Activated CD4-positive, alpha-beta T cell treated with anti-CD3 and anti-CD28 coated beads for 36 hours (primary cell): ENCODE measurements at regions of chr17 and their contacts with region 1.

Region 1: DNA sequence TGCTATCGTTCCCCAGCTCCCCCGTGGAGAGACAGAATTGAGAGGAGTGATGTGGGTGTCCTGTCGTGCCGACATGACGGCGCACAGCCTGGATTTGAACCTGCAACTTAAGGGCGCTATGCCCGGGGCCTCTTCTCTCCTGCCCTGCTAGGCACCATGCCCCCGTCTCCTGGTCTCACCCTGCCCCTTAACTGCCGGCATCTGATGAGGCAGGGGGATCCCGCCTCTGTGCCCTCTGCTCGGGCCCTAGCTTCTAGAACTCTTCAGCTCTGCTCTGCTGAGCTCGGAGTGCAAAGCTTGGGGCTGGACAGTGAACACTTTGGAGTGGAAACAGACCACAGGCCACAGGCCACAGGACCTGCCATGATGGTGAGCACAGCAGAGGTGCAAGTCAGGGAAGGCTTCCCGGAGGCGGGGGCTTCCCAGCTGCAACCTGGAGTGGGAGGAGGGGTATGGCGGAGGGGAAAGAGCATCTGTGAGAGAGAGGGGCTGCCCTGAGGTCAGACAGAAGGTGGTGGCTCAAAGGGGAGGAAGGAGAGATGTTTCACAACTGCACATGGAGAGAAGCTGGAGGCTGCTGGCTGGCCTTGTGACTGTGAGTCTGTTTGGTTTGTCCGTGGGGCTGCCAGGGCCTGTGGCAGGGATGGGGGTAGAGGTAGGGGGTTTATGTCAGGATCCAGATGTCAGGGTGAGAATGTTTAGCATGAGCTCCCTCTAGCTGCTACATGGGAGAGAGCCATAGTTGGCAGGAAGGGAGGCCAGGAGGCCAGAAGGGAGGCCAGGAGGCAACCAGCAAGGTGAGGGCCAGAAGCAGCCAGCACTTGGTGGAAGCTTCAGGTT is 107.8 kb downstream of the CRLF3 start:
- DNase-seq: no peak
- ATAC-seq: no peak
- H3K4me3 Mint-ChIP-seq: no peak overlapping the region
- H3K27ac Mint-ChIP-seq: no peak overlapping the region
- H3K4me1 Mint-ChIP-seq: peaks cover 8% of the 10 kb centered on the region
- H3K27me3 Mint-ChIP-seq: no peaks in the 10 kb centered on the region

Region 2: DNA sequence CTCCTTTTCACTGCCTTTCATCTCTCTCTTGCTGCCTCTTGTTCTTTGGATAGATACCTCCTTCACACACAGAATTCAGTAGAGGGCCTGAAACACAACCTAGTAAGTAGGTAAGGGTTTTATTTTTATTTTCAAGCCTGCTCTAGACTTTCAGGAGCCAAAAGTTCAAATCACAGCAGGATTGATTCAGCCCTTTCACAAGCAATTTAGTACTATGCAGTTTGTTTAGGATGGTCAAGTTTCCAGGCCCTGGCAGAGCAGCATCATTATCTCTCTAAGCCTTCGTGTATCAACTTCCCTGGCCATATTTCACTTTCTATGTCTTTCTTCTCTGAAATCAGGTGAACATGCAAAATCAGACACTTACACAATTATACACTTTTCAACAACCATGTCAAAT is 945.1 kb before region 1 on chr17:
- CTCF ChIA-PET with region 1: no interaction called
- POLR2A ChIA-PET with region 1: no interaction called
- intact Hi-C with region 1: no loop called
- DNase-seq: no peak
- ATAC-seq: no peak
- H3K4me3 Mint-ChIP-seq: no peak overlapping the region
- H3K27ac Mint-ChIP-seq: no peak overlapping the region
- H3K4me1 Mint-ChIP-seq: no peaks in the 10 kb centered on the region
- H3K27me3 Mint-ChIP-seq: no peaks in the 10 kb centered on the region

Region 3: DNA sequence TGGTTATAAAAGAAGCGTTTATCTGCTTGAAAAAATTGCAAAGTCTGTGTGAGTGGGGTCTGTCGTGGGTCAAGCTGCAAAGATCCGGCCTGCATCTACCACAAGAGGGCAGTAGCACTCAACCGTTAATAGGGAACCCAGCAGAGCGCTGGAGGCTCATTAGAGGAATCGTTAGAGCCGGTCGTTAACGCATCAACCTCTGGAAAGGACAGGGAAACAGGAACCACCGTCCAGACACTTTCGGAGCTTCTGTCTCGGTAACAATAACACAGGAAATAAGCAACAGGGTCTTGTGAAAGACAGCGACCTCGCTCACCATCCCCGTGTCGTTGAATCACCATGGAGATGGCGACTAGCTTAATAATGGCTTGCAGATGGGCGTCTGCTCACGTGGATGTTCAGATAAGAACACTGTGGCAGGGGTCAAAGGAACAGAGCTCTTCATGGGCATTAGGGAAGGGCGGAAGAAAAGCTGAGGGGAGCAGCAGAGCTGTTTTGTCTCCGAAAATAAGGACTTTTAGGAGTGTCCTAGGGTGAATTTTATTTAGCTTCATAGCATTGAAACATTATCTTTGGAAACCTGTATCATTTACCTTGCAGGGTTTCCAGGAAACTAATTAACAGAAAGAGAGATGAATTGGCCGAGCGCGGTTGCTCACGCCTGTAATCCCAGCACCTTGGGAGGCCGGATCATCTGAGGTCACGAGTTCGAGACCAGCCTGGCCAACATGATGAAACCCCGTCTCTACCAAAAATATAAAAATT is 611.9 kb before region 1 on chr17:
- CTCF ChIA-PET with region 1: no interaction called
- POLR2A ChIA-PET with region 1: no interaction called
- intact Hi-C with region 1: loop called in 1 of 2 experiments (anchors 2 kb)
- DNase-seq: peak; percentile 81
- ATAC-seq: peak; percentile 97
- H3K4me3 Mint-ChIP-seq: peak overlapping the region; percentile 67
- H3K27ac Mint-ChIP-seq: peak overlapping the region; percentile 24
- H3K4me1 Mint-ChIP-seq: peaks cover 5% of the 10 kb centered on the region
- H3K27me3 Mint-ChIP-seq: peaks cover 2% of the 10 kb centered on the region

Region 4: GRCh38 chr17:30344283-30345088 is 372.2 kb before region 1 on chr17:
- CTCF ChIA-PET with region 1: no interaction called
- POLR2A ChIA-PET with region 1: no interaction called
- intact Hi-C with region 1: loop called (anchors 1 to 5 kb)
- DNase-seq: no peak
- ATAC-seq: no peak
- H3K4me3 Mint-ChIP-seq: no peak overlapping the region
- H3K27ac Mint-ChIP-seq: no peak overlapping the region
- H3K4me1 Mint-ChIP-seq: peaks cover 21% of the 10 kb centered on the region
- H3K27me3 Mint-ChIP-seq: no peaks in the 10 kb centered on the region

Region 5: DNA sequence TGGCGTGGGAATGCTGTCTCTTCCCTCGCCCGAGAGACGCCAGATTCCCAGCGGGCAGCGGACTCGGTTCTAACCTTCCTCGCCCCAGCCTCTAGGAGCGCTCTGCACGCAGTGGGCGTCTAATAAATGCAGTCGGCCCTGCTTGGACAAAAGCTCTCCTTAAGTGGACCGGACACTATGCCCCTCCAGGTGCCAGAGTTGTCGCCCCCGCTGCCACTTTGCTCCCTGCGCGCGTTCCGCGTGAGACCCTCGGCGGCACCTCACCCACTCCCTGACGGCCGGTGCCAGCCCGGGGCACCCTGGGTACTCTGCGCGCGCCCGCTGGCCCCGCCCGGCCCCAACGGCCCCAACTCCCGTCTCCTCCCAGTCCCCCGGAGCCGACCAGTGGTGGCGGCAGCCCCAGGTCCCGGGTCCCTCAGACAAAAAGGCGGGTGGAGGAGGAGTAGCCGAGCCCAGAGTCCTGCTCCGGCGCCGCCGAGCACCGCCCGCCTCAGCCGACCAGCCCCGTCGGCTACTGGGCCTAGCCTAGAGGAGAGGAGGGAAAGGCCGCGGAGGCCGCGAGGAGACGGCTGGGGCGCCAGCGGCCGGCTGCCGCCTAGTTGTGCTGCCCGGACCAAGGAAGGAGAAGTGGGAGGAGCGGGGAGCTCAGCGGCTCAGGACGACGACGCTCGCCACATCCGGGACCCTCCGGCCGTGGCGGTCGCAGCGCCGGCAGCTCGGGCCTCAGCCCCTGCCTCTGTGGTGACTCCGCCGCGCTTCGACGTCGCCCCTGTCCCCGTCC is 116.4 kb before region 1 on chr17:
- CTCF ChIA-PET with region 1: no interaction called
- POLR2A ChIA-PET with region 1: no interaction called
- intact Hi-C with region 1: loop called in 1 of 2 experiments (anchors 5 kb)
- DNase-seq: peak; percentile 81
- ATAC-seq: peak; percentile 95
- H3K4me3 Mint-ChIP-seq: peak overlapping the region; percentile 95
- H3K27ac Mint-ChIP-seq: no peak overlapping the region
- H3K4me1 Mint-ChIP-seq: peaks cover 29% of the 10 kb centered on the region
- H3K27me3 Mint-ChIP-seq: no peaks in the 10 kb centered on the region

Region 6: GRCh38 chr17:32192379-32192778 is 1475.7 kb after region 1 on chr17:
- CTCF ChIA-PET with region 1: no interaction called
- POLR2A ChIA-PET with region 1: interaction called, 10 read pairs
- intact Hi-C with region 1: no loop called
- DNase-seq: no peak
- ATAC-seq: no peak
- H3K4me3 Mint-ChIP-seq: no peak overlapping the region
- H3K27ac Mint-ChIP-seq: no peak overlapping the region
- H3K4me1 Mint-ChIP-seq: peaks cover 4% of the 10 kb centered on the region
- H3K27me3 Mint-ChIP-seq: no peaks in the 10 kb centered on the region